ENCODE measurements at regions of chr17 and their contacts with region 1.

Region 1: GRCh38 chr17:13017659-13018459 is at the start of gene ELAC2:
- DNase-seq: peak; percentile 97
- H3K4me3 Mint-ChIP-seq: peak within 1 kb of the TSS; percentile 93
- H3K27ac Mint-ChIP-seq: peak within 1 kb of the TSS; percentile 97
- H3K4me1 Mint-ChIP-seq: peaks cover 27% of the 10 kb centered on the region
- H3K27me3 Mint-ChIP-seq: no peaks in the 10 kb centered on the region
- total RNA-seq, gene ELAC2: 74.1 to 75.9 TPM

Region 2: DNA sequence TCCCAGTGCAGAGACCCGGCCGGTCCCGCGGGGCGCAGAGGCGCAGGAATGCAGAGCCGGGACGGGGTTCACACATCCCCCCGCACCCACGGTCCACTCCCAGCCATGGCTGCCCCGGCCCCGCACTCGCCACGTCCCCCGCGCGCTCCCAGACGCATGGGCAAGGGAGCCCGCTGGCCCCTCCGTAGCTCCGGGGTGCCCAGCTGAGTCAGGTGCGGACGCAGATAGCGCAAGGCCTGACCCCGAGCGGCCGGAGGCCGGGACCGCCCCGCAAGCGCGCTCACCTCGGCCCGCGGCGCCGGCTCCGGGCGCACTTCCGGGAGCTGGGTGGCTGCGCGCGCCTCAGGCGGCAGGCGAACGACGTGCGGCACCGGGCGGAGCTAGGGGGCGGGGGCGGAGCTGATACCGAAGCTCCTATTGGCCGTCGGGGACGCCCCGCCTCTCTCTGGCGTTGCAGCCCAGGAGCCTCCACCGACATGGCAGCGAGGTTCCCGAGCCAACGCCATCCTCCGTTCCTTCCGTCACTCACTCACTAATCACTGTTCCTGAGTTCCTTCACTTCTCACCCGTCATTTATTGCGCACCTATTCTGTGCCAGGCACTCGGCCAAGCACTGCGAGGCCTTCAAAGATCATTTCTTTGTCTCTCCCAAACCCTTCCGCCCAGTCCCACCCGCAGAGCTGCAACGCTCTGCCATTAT is 1020.6 kb before region 1 on chr17 and contains the start of gene ZNF18:
- CTCF ChIA-PET with region 1: no interaction called
- intact Hi-C with region 1: loop called (anchors 1 kb)
- DNase-seq: peak; percentile 95
- H3K4me3 Mint-ChIP-seq: peak within 1 kb of the TSS; percentile 88
- H3K27ac Mint-ChIP-seq: peak within 1 kb of the TSS; percentile 82
- H3K4me1 Mint-ChIP-seq: peaks cover 24% of the 10 kb centered on the region
- H3K27me3 Mint-ChIP-seq: no peaks in the 10 kb centered on the region
- total RNA-seq, gene ZNF18: 8.1 to 8.2 TPM

Region 3: GRCh38 chr17:13002766-13003451 is 14.9 kb before region 1 on chr17:
- CTCF ChIA-PET with region 1: interaction called, 10 read pairs
- intact Hi-C with region 1: no loop called
- DNase-seq: peak; percentile 68
- H3K4me3 Mint-ChIP-seq: no peak overlapping the region
- H3K27ac Mint-ChIP-seq: no peak overlapping the region
- H3K4me1 Mint-ChIP-seq: peaks cover 2% of the 10 kb centered on the region
- H3K27me3 Mint-ChIP-seq: no peaks in the 10 kb centered on the region

Region 4: DNA sequence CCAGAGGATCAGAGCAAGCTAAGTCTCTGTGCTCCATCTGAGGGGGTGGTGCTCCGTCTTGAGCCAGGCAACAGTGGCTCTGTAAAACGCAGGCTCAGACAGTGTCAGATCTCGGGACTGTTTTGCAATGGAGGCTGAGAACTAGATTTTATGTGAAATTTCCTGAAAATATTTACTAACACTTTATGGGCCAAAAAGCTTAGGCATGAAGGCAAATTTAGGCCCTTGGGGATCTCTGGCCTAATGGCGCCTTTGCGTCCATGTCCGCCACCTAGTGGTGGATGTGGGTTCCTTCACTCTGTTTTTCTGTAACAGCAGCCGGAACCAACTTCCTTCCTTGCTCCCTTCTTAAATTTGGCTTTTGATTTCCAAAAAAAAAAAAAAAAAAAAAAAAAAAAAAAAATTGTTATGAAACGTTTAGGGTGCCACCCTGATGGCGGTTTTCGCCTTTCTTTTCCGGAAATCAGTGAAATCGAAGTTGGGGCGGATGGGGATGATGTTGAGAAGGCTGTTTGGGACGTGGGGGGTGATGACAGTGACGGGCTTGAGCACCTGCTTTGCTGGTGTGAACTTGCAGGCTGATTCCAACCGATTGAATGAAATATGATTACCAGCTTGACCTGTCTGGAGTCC is 14.0 kb after region 1 on chr17:
- CTCF ChIA-PET with region 1: interaction called, 100 read pairs
- intact Hi-C with region 1: no loop called
- DNase-seq: peak; percentile 63
- H3K4me3 Mint-ChIP-seq: no peak overlapping the region
- H3K27ac Mint-ChIP-seq: no peak overlapping the region
- H3K4me1 Mint-ChIP-seq: peaks cover 11% of the 10 kb centered on the region
- H3K27me3 Mint-ChIP-seq: no peaks in the 10 kb centered on the region

Region 5: DNA sequence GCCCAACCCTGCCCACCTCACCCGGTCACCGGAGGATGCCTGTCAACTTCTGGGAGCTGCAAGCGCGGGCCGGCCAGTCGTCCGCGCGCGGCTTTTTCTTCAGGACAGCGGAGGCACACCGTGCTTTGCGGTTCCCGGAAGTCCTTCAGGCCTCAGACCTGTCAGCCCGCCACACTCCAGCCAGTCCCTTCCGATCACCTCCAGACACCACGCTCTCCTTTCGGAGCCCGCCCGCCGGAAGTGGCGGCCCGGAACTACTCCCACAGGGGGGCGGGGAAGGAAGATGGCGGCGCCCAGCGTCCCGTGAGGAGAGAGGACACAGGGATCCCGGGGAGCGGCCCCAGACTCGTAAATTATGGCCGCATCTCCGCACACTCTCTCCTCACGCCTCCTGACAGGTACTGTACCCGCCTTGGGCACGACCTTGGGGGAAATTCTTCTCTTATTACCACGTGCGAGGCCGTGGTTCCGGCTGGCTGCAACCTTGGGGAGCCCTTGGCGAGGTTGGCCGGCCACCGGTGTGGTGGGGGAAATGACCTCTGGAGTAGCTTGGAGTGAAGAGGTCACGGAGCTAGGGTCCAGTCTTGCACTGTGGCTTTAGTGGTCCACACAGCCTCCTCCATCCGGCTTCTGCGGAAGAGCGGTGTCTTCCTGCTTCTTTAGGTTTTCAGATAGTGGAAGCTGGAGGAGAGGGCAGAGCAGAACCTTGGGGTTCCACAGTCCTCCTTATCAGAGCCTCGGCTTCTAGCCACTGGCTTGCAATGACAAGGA is 1051.6 kb after region 1 on chr17 and contains the start of gene COX10:
- CTCF ChIA-PET with region 1: no interaction called
- intact Hi-C with region 1: loop called (anchors 10 kb)
- DNase-seq: peak; percentile 88
- H3K4me3 Mint-ChIP-seq: peak within 1 kb of the TSS; percentile 94
- H3K27ac Mint-ChIP-seq: peak within 1 kb of the TSS; percentile 87
- H3K4me1 Mint-ChIP-seq: peaks cover 67% of the 10 kb centered on the region
- H3K27me3 Mint-ChIP-seq: no peaks in the 10 kb centered on the region
- total RNA-seq, gene COX10: 29.9 to 30.6 TPM

Region 6: DNA sequence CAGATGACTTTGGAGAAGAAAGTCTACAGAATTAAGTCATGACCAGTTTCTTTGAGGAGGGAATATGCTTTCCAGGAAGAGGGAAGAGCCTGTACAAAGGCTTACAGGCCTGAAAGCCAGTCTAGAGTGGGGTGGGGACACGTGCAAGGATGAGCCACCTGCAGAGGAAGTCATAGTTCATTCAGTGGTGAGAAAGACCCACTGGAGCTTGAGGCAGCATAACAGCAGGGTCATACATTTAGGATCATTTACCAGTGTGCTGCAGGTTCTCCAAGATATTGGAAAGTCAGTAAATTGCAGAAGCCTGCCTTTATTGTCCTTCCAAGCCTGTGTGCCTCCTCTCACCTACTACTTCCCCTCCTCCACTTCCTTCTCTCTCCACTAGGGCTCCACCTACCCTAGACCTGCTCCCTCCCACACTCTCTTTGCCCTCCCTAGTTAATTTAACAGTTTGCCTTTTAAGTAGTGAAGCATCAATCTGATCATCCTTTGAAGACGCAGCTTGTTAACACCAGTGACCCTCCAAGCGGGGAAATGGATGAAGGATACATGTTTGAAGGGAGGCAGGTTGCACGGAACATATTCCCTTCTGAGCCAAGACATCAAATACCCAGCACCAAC is 1178.6 kb after region 1 on chr17:
- CTCF ChIA-PET with region 1: no interaction called
- intact Hi-C with region 1: loop called (anchors 5 kb)
- DNase-seq: peak; percentile 40
- H3K4me3 Mint-ChIP-seq: peak overlapping the region; percentile 35
- H3K27ac Mint-ChIP-seq: peak overlapping the region; percentile 91
- H3K4me1 Mint-ChIP-seq: peaks cover 84% of the 10 kb centered on the region
- H3K27me3 Mint-ChIP-seq: no peaks in the 10 kb centered on the region

Measured in activated naive CD4-positive, alpha-beta T cell treated with anti-CD3 and anti-CD28 coated beads for 36 hours (primary cell).